ENCODE measurements at regions of chr4 and their contacts with region 1.

Region 1: DNA sequence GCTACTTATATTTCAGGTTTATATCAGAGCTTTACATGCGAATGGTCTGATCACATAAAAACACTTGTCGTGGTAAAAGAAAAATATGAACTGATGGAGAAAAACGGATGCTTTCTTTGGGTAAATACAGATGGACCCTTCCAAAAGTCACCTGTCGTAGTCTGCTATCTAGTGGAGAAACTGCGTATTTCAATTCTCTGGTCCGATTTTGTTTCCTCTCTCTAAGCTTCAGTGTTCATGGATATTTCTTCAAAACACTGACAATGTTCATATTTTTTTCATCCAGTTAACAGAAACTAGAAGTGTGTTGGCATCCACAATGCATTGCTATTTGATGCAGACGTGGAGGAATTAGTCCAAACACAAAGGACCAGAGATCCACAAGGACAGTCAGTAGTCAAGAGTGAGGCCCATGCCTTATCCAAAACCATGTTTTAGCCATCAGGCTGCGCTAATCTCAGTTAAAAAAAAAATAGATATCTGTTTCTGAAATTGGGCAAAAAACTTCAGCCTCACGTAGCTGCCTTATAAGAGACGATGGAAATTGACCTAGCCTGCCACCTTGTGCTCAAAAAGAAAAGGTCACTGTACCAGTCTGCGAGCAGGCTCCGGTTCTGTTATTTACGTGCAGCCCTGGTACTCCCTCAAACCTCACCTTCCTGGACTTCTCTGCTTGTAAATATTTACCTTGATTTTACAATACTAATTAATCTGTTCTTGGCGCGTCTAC is 16.0 kb downstream of the MEPE start:
- DNase-seq: peak in 1 of 3 donors; percentile 53
- ATAC-seq: peak; percentile 76
- H3K4me3 ChIP-seq: no peak overlapping the region
- H3K4me1 ChIP-seq: no peaks in the 10 kb centered on the region
- CTCF ChIP-seq: no peak

Region 2: GRCh38 chr4:87476934-87477333 is 371.9 kb before region 1 on chr4:
- intact Hi-C with region 1: no loop called
- DNase-seq: no peak
- ATAC-seq: no peak
- H3K4me3 ChIP-seq: no peak overlapping the region
- H3K4me1 ChIP-seq: no peaks in the 10 kb centered on the region
- CTCF ChIP-seq: no peak

Region 3: DNA sequence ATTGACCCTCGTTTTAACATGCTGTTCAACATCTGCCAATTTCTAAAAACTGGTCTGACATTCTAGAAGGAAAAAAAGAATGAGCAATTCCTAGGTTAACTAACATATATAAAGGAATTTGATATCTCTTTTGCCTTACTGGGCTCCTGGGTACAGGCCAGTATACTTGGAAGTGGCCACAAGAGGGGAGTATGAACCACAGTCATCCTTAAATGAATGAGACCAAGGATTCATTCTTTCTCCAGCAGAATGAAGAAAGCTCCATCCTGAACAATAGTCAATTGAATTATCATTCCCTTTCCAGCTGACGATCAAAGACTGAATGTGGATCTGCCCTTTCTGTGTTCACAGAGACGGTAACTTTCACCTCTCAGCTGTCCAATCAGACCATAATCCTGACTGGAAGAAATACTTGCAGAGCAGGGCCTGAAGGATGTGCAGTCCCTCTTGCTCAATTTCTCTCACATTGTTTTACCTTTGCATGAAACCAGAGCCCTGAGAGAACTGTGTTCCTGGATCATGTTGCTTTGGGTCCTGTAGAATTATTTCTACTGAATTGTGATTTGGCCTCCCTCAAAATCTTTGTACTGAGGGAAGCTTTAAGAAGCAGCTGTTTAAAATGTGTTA is 304.8 kb before region 1 on chr4:
- intact Hi-C with region 1: loop called in 1 of 2 experiments (anchors 10 kb)
- DNase-seq: peak in 1 of 3 donors; percentile 10
- ATAC-seq: peak; percentile 38
- H3K4me3 ChIP-seq: no peak overlapping the region
- H3K4me1 ChIP-seq: no peaks in the 10 kb centered on the region
- CTCF ChIP-seq: no peak

Region 4: GRCh38 chr4:87973283-87974169 is 124.7 kb after region 1 on chr4:
- intact Hi-C with region 1: loop called (anchors 5 to 10 kb)
- DNase-seq: peak in 2 of 3 donors; percentile 45 to 57
- ATAC-seq: peak; percentile 62
- H3K4me3 ChIP-seq: no peak overlapping the region
- H3K4me1 ChIP-seq: no peaks in the 10 kb centered on the region
- CTCF ChIP-seq: peak; percentile 44